ENCODE measurements at regions of chr1 and their contacts with region 1.

Region 1: DNA sequence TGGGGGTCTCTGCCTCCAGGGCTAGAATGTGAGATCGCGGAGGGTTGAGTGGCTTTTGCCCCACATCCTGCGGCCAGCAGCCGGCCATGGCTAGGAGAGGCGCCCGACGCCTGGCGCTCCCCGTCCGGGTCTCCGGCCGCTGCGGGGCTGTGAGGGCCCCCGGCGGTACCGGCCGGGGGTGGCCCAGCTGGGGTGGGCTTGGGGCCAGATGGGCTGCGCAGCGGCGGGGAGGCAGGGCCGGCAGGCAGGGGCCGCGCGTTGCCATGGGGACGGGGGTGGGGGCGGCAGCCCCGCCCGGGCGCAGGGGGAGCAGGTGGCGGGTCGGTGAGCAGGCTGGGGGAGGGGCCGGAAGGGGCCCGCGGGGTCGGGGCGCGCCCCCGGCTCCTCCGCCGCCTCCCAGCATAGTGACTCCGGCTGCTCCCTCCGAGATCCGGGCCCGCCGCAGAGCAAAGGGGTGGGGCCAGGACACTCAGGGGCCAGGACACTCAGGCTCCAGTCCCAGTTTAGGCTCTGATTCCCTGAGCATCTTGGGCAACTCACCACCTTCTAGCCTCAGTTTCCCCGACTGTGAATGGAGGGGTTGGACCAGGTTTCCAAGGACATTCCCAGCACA is 68.6 kb upstream of the SSBP3 start:
- DNase-seq: peak; percentile 48
- CTCF ChIP-seq: no peak

Region 2: GRCh38 chr1:54094001-54094729 is 380.6 kb before region 1 on chr1:
- in situ Hi-C with region 1: no loop called
- DNase-seq: no peak
- CTCF ChIP-seq: no peak

Region 3: DNA sequence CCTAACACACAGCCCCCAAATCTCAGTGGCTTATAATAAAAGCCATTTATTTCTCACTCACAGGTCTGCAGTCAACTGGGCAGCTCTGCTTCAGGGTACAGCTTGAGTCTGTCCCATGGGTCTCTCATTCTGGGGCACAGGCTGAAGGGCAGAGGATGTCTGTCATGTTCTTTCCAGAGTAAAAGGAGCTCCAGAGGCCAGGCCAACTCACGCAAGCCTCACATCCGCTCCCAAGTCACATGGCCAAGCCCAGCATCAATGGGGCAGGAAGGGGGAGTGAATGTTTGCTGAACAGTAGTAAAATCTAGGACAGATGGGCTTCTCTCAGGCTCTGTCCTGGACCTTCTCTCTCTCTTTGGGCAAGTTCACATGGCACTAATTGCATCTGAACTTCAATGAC is 61.5 kb before region 1 on chr1:
- in situ Hi-C with region 1: loop called (anchors 10 kb)
- DNase-seq: no peak
- CTCF ChIP-seq: no peak